Right ventricle myocardium inferior (tissue), 1 donor: ENCODE measurements at regions of chr17 and their contacts with region 1.

Region 1: DNA sequence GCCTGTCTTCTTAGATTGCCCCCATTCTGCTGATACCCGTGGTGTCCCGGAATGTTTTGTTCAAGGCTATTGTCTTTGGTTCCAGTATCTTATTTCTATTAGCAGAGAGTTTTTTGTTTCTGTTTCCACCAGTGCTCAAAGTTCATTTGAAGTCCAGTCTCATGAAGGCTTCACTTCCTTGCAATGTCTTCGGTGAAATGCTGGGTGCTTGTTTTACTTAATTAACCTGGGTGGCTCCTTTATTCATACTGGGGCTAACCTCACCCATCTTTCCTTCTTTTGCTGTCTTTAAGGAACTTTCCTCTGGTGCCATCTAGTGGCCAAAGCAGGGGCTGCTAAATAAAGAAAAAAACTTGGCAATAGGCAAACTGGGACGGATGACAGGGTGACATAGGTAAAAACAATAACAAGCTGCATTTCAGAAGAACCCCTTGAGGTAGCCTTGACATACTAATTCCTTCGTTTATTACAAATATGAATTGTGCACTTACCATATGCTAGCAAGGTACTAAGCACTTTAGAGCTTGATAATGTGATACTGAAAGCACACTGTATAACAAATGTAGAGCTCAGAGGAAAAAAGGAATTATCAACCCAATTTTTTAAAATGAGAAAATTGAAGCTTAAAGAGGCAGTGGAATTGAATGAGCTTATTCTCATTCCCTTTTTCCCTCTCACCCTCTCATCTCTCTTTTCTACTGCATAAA is 2.8 kb upstream of the SMIM36 start:
- DNase-seq: no peak
- ATAC-seq: peak; percentile 59

Region 2: DNA sequence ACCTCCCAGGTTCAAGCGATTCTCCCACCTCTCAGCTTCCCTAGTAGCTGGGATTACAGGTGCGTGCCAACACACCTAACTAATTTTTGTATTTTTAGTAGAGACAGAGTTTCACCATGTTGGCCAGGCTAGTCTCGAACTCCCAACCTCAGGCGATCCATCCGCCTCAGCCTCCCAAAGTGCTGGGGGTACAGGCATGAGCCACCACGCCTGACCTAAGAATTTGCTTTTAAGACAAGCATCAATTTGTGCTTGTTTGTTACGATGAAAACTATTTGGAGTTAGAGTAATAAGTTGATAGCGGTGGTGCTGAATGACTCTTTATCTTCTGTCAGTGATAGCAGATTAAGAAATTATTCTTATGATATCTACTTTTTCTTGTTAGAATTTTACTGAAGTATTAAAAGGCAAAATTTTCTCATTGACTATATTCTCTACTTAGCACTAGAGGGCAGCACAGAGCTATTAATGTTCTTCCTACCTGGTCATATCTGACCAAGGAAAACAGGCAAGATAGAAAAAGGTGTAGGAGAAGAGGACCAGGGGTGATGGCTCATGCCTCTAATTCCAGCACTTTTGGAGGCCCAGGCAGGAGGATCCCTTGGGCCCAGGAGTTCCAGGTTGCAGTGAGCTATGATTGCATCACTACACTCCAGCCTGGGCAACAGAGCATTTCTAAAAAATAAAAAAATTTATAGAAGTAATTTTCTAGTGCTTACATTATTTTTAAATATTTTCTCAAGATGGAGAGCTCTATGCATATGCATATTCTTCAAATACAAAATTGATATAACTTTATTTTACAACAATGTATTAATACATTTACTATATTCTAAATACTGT is 521.0 kb before region 1 on chr17:
- intact Hi-C with region 1: loop called (anchors 5 kb)
- DNase-seq: no peak
- ATAC-seq: no peak

Region 3: DNA sequence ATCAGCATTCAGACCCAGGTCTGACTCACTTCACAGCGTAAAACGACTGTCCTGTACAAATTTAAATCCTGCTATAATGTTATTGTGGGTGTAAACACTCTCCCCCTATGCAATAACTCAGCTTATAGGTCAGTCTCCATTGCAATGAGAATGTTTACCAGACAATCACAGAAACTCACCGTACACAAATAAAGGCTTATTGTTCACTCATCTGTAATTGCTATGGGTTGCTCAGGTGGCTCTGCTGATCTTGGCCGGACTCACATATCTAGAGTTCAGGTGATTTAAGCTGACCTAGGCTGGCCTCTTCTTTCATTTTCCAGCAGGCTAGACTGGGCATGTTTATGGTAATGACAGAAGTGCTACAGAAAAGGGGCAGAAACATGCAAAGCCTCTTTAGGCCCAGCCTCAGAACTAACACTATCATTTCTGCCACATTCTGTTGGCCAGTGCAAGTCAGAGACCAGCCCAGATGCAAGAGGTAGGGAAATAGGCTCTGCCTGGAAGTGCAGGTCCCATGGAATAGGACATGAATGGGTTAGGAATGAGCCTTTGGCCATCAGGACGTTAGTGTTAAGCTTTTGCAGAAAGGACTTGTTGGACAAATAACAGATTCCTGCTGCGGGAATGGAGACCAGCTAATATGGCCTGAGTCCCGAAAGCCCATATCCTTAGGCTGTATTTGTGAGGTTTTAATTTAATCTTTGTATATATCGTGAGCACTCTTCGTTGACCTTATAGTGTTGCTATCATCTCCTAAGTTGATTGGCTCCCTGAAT is 205.2 kb before region 1 on chr17:
- intact Hi-C with region 1: loop called (anchors 5 kb)
- DNase-seq: no peak
- ATAC-seq: no peak

Region 4: GRCh38 chr17:55496094-55496881 is 17.8 kb before region 1 on chr17:
- intact Hi-C with region 1: no loop called
- DNase-seq: peak; percentile 67
- ATAC-seq: peak; percentile 87

Region 5: DNA sequence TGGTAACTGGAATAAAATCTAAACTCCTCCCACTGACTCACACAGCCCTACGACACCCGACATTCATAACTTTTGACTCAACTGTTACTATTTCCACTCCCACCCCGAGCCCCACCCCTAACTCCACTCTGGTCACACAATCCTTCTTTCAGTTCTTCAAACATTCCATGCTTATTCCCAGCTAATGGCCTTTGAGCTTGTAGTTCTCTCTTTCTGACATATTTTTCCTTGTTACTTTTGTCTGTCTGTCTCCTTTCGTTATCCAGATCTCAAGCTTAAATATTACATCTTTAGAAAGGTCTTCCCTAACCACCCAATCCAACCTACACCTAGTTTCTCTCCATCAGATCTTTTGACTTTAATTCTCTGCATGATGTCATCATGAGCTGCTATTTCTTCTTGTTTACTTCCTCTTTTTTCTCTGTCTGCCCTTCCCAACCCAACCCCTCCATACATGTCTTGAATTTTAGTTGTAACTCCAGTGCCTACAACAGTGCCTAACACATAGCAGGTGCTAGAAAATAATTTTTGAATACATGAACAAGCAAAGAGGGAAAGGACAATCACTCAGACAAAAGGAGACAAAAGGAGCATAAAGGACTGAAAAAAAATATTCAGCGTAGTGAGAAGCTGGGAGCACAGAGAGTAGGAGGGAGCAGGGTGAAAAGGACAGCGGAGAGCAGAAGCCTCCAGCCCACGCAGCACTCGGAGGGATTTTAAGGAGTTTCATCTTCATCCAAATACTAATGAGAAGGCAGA is 62.4 kb after region 1 on chr17:
- intact Hi-C with region 1: no loop called
- DNase-seq: no peak
- ATAC-seq: peak; percentile 70